A549 (cell line): ENCODE measurements at regions of chr20 and their contacts with region 1.

Region 1: GRCh38 chr20:59955132-59955796 is 3.0 kb upstream of the CDH26 start:
- DNase-seq: peak; percentile 40 to 49
- ATAC-seq: peak; percentile 85 to 92
- H3K4me3 ChIP-seq: no peak overlapping the region
- H3K27ac ChIP-seq: no peak overlapping the region
- H3K4me1 ChIP-seq: no peaks in the 10 kb centered on the region
- CTCF ChIP-seq: peak; percentile 27
- EP300 ChIP-seq: no peak
- POLR2A ChIP-seq: no peak
- RAD21 ChIP-seq: peak; percentile 17 to 19; a peak in 1 of 5 replicates

Region 2: DNA sequence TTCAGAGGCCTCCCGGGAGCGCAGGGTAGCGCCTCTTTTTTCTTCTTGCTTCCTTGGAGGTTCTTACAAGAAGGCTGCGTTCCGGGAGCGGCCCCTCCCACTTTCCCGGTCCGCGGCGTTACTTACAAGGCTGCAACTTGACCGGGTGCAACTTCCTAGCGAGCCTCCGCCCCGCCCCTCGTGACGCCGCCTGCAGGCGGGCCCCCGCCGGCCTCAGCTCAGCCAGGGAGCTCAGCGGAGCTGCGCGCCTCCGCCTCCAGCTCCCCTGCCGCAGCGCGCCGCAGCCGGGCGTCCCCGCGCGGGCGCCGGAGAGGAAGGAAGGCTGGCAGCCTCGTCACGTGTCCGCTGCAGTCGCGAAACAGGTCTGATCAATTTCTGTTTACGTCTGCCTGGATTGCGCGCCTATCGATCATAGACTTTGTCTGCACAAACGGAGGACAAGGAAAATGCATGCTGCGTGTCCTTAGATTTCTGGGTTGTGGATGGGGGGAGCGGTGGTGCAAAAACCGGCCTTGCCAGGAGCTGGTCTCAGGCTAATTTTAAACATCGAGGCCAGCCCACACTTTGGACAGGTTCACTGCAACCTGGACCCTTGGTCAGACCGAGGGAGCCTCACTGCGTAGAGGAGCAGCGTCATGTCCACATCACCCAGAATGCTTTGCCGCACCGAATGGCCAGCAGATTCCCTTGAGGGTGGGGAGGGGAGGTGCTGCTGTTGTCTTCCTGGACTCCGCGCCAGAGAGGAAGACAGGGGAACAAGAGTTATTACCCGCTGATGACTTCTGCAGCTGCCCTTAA is 14.9 kb before region 1 on chr20 and contains the starts of genes FAM217B and PPP1R3D:
- CTCF ChIA-PET with region 1: interaction called, 73 read pairs
- POLR2A ChIA-PET with region 1: interaction called, 8 read pairs
- DNase-seq: peak; percentile 94 to 95
- ATAC-seq: peak; percentile 98 to 99
- H3K4me3 ChIP-seq: peak within 1 kb of the TSS; percentile 82
- H3K27ac ChIP-seq: peak within 1 kb of the TSS; percentile 95 to 96
- H3K4me1 ChIP-seq: peaks cover 24% of the 10 kb centered on the region
- CTCF ChIP-seq: no peak
- EP300 ChIP-seq: no peak
- POLR2A ChIP-seq: peak; percentile 82
- RAD21 ChIP-seq: no peak
- polyA plus RNA-seq, gene FAM217B: 11.6 and 12.3 TPM in 2 replicates
- polyA plus RNA-seq, gene PPP1R3D: 2.6 and 2.7 TPM in 2 replicates